Activated B cell treated with CpG ODN at 0.5 μM for 24 hours (primary cell): ENCODE measurements at regions of chr5 and their contacts with region 1.

Region 1: GRCh38 chr5:150458819-150459557 is 9.4 kb upstream of the RPS14 start:
- DNase-seq: peak; percentile 90
- ATAC-seq: peak; percentile 94
- H3K4me3 Mint-ChIP-seq: peak overlapping the region; percentile 58
- H3K27ac Mint-ChIP-seq: peak overlapping the region; percentile 50
- H3K4me1 Mint-ChIP-seq: peaks cover 44% of the 10 kb centered on the region
- H3K27me3 Mint-ChIP-seq: no peaks in the 10 kb centered on the region
- CTCF ChIP-seq: no peak

Region 2: GRCh38 chr5:149796030-149796429 is 663.0 kb before region 1 on chr5:
- CTCF ChIA-PET with region 1: no interaction called
- POLR2A ChIA-PET with region 1: no interaction called
- intact Hi-C with region 1: no loop called
- DNase-seq: no peak
- ATAC-seq: no peak
- H3K4me3 Mint-ChIP-seq: no peak overlapping the region
- H3K27ac Mint-ChIP-seq: no peak overlapping the region
- H3K4me1 Mint-ChIP-seq: peaks cover 7% of the 10 kb centered on the region
- H3K27me3 Mint-ChIP-seq: no peaks in the 10 kb centered on the region
- CTCF ChIP-seq: no peak

Region 3: GRCh38 chr5:150486402-150487198 is 27.6 kb after region 1 on chr5:
- CTCF ChIA-PET with region 1: interaction called, 7 read pairs
- POLR2A ChIA-PET with region 1: interaction called, 11 read pairs
- intact Hi-C with region 1: loop called (anchors 1 kb)
- DNase-seq: peak; percentile 76
- ATAC-seq: peak; percentile 38
- H3K4me3 Mint-ChIP-seq: peak overlapping the region; percentile 79
- H3K27ac Mint-ChIP-seq: peak overlapping the region; percentile 85
- H3K4me1 Mint-ChIP-seq: peaks cover 53% of the 10 kb centered on the region
- H3K27me3 Mint-ChIP-seq: no peaks in the 10 kb centered on the region
- CTCF ChIP-seq: no peak

Region 4: GRCh38 chr5:150544611-150545219 is 85.7 kb after region 1 on chr5:
- CTCF ChIA-PET with region 1: interaction called, 28 read pairs
- POLR2A ChIA-PET with region 1: no interaction called
- intact Hi-C with region 1: loop called (anchors 1 kb)
- DNase-seq: peak; percentile 58
- ATAC-seq: peak; percentile 100
- H3K4me3 Mint-ChIP-seq: no peak overlapping the region
- H3K27ac Mint-ChIP-seq: no peak overlapping the region
- H3K4me1 Mint-ChIP-seq: no peaks in the 10 kb centered on the region
- H3K27me3 Mint-ChIP-seq: no peaks in the 10 kb centered on the region
- CTCF ChIP-seq: peak; percentile 32

Region 5: DNA sequence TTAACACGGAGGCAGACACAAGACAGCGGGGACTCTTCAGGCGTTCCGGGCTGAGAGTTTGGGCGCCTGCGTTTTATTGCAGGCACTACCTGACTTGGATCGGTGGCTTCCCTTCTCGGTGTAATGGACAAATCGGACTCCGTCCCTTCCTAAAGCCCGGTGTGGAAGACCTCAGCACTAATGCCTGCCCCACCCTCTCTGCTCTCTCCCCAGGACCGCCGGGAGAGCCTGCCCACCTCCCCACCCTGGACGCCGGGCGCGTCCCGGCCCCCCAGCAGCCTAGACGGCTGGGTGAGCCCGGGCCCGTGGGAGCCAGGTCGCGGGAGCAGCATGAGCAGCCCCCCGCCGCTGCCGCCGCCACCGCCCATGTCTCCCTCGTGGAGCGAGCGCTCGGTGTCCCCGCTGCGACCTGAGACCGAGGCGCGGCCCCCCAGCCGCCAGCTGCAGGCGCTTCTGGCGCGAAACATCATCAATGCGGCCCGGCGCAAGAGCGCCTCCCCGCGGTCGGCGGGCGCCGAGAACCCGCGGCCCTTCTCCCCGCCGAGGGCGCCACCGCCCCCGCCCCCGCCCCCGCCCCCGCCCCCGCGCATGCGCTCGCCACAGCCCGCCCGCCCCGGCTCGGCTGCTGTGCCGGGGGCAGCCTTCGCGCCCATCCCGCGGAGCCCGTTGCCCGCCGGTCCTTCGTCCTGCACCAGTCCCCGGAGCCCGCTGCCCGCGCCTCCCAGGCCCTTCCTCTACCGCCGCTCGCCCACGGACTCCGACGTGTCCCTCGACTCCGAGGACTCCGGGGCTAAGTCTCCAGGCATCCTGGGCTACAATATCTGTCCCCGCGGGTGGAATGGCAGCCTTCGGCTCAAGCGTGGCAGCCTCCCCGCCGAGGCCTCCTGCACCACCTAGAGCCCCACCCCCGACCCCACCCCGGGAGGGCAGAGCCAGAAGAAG is 197.5 kb after region 1 on chr5:
- CTCF ChIA-PET with region 1: interaction called, 3 read pairs
- POLR2A ChIA-PET with region 1: no interaction called
- intact Hi-C with region 1: loop called (anchors 1 kb)
- DNase-seq: peak; percentile 84
- ATAC-seq: peak; percentile 93
- H3K4me3 Mint-ChIP-seq: peak overlapping the region; percentile 81
- H3K27ac Mint-ChIP-seq: no peak overlapping the region
- H3K4me1 Mint-ChIP-seq: peaks cover 16% of the 10 kb centered on the region
- H3K27me3 Mint-ChIP-seq: no peaks in the 10 kb centered on the region
- CTCF ChIP-seq: peak; percentile 23

Region 6: DNA sequence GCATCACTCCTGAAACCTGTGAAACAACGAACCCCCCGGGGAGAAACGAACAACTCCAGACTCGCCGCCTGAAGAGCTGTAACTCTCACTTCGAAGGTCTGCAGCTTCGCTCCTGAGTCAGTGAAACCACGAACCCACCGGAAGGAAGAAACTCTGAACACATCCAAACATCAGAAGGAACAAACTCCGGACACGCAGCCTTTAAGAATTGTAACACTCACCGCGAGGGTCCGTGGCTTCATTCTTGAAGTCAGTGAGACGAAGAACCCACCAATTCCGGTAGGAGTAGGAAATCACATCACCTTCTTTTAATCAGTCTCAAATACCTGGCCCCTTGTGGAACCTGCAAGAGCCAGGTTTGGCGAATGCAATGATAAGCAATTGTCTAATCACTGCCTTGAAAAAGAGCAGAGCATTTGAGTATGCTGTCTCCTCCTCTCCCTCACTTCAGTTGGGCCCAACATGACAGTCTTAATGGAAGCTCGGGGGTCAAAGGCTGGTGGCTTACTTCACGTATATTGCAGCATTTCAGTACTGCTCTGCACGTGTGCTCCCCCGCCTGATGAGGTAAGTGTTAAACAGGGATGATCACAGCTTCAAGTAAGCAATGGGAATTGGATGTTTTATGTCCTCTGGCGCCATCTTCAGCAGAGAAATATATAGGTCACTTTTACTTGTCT is 387.8 kb after region 1 on chr5:
- CTCF ChIA-PET with region 1: interaction called, 6 read pairs
- POLR2A ChIA-PET with region 1: no interaction called
- intact Hi-C with region 1: loop called (anchors 1 kb)
- DNase-seq: no peak
- ATAC-seq: peak; percentile 96
- H3K4me3 Mint-ChIP-seq: peak overlapping the region; percentile 81
- H3K27ac Mint-ChIP-seq: peak overlapping the region; percentile 55
- H3K4me1 Mint-ChIP-seq: peaks cover 10% of the 10 kb centered on the region
- H3K27me3 Mint-ChIP-seq: no peaks in the 10 kb centered on the region
- CTCF ChIP-seq: no peak